ENCODE measurements at regions of chr4 and their contacts with region 1.

Region 1: DNA sequence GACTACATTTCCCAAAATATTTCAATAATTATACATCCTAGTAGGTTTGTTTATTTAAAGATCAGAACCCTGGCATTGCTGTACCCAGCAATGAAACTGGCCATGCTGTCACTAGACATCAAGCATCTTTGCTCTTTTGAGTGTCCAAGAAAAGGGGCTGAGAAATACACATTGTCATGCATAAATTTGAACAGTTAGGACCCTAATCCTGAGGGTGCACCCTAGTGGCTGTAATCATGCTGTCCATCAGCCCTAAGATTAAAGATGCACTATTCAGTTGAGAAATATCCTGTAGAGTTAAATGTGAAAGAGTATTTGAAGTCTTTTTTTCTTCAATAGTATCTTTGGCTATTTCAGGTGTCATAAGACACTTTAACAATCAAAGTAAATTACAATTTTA is 108.8 kb downstream of the NFKB1 start:
- DNase-seq: no peak
- H3K4me3 Mint-ChIP-seq: no peak overlapping the region
- H3K27ac Mint-ChIP-seq: peak overlapping the region; percentile 42
- H3K4me1 Mint-ChIP-seq: peaks cover 90% of the 10 kb centered on the region
- H3K27me3 Mint-ChIP-seq: no peaks in the 10 kb centered on the region

Region 2: GRCh38 chr4:102454981-102455685 is 154.9 kb before region 1 on chr4:
- CTCF ChIA-PET with region 1: no interaction called
- POLR2A ChIA-PET with region 1: no interaction called
- DNase-seq: no peak
- H3K4me3 Mint-ChIP-seq: no peak overlapping the region
- H3K27ac Mint-ChIP-seq: no peak overlapping the region
- H3K4me1 Mint-ChIP-seq: peaks cover 17% of the 10 kb centered on the region
- H3K27me3 Mint-ChIP-seq: peaks cover 5% of the 10 kb centered on the region

Region 3: GRCh38 chr4:102500696-102501446 is 109.1 kb before region 1 on chr4 and contains the start of gene NFKB1:
- CTCF ChIA-PET with region 1: interaction called, 3 read pairs
- POLR2A ChIA-PET with region 1: interaction called, 37 read pairs
- DNase-seq: peak; percentile 78
- H3K4me3 Mint-ChIP-seq: peak within 1 kb of the TSS; percentile 89
- H3K27ac Mint-ChIP-seq: peak within 1 kb of the TSS; percentile 87
- H3K4me1 Mint-ChIP-seq: peaks cover 26% of the 10 kb centered on the region
- H3K27me3 Mint-ChIP-seq: peaks cover 3% of the 10 kb centered on the region
- total RNA-seq, gene NFKB1: 84.7 to 88.1 TPM

Region 4: DNA sequence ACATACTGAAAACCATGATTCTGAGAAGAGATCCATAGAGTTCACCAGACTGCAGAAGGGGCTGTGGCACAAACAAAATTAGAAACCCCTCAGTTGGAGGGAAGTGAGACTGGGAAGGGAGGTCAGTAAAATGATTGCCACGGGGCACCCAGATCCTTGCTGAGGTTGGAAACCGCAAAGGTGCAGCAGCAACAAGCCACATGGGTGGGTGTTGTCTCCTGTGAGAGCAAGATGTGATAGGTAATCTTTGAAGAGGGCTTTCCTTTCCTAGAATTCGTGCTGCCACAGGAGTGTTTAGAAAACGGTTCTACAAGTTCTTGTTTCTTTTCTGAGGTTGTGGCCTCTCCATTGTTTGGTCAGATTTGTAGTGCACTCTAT is 23.4 kb before region 1 on chr4:
- CTCF ChIA-PET with region 1: interaction called, 8 read pairs
- POLR2A ChIA-PET with region 1: interaction called, 73 read pairs
- DNase-seq: peak; percentile 70
- H3K4me3 Mint-ChIP-seq: peak overlapping the region; percentile 50
- H3K27ac Mint-ChIP-seq: peak overlapping the region; percentile 81
- H3K4me1 Mint-ChIP-seq: peaks cover 87% of the 10 kb centered on the region
- H3K27me3 Mint-ChIP-seq: no peaks in the 10 kb centered on the region

Region 5: DNA sequence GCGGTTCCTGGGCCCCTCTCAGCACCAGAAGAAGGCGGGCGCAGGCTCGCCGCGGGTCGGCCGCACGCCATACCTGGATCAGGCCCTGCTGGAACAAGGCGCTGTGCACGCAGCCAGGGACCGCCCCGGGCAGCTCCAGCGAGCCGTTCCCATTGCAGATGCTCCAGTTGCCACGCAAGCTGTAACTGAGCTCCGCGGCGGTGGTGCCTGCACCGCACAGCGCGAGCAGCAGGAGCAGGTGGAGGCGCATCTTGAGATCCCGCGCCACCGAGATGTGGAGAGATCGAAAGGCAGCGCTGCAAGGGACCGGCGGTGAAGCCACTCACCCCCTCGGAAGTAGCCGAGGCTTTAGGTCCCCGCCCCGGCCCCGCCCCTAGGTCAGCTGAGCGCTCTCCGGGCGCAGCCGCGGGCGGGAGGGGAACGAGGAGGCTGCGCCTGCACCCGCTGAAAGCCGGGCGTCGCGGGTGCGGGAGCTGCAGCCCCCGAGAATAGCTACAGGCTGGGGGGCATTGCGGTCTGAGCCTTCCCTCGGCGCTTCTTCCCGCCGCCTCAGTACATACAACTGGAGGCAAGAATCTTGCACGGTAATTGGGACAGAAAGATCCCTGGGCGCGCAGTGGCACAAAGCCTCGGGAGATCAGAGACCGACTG is 150.8 kb after region 1 on chr4 and contains the start of gene MANBA:
- CTCF ChIA-PET with region 1: no interaction called
- POLR2A ChIA-PET with region 1: interaction called, 11 read pairs
- DNase-seq: peak; percentile 89
- H3K4me3 Mint-ChIP-seq: peak within 1 kb of the TSS; percentile 99
- H3K27ac Mint-ChIP-seq: peak within 1 kb of the TSS; percentile 81
- H3K4me1 Mint-ChIP-seq: peaks cover 26% of the 10 kb centered on the region
- H3K27me3 Mint-ChIP-seq: peaks cover 8% of the 10 kb centered on the region
- total RNA-seq, gene MANBA: 13.6 to 14.5 TPM

Region 6: GRCh38 chr4:102780476-102781144 is 170.6 kb after region 1 on chr4:
- CTCF ChIA-PET with region 1: no interaction called
- POLR2A ChIA-PET with region 1: no interaction called
- DNase-seq: no peak
- H3K4me3 Mint-ChIP-seq: no peak overlapping the region
- H3K27ac Mint-ChIP-seq: no peak overlapping the region
- H3K4me1 Mint-ChIP-seq: peaks cover 8% of the 10 kb centered on the region
- H3K27me3 Mint-ChIP-seq: peaks cover 16% of the 10 kb centered on the region